Motor neuron (in vitro differentiated cells): ENCODE measurements at regions of chr1 and their contacts with region 1.

Region 1: DNA sequence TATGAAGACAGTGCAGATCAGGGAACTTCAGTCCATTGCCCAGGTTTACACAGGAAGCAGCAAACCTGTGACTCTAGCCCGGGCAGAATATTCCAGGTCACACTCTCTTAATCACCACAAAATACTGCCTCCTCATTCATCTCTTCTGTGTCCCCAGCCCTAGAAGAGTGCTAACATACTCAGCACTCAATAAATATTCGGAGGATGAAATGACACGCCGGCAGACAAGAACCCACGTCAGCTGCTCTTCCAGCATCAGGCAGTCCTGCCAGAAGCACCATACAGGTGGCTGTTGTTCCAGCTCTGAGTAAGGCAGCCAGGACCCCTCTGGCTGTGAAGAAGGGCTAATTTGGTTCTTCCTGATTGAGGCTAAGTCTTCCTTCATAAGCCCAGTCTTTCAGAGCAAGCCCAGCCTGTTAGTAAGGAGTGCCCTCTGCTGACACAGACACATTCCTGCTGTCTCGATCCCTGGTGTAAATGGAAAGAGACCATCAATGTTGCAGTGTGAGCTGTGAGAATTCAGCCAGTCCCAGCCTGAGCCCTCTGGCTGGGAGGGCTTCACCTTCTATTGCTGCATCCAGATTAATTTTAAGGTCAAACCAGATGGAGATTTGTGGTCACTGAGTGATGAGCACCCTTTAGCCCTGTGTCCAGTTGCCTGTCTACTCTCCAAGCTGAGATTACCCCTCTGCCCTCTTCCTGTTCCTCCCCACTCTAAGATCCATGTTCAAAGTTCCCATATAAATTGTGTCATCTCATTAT is 45.0 kb upstream of the KIRREL1 start:
- ATAC-seq: peak; percentile 86 to 98 (median 93)
- H3K4me3 ChIP-seq: no peak overlapping the region
- H3K27ac ChIP-seq: peak overlapping the region in 1 of 2 donors; percentile 40
- H3K4me1 ChIP-seq: peaks cover 9 to 24% of the 10 kb centered on the region in 2 donors

Region 2: DNA sequence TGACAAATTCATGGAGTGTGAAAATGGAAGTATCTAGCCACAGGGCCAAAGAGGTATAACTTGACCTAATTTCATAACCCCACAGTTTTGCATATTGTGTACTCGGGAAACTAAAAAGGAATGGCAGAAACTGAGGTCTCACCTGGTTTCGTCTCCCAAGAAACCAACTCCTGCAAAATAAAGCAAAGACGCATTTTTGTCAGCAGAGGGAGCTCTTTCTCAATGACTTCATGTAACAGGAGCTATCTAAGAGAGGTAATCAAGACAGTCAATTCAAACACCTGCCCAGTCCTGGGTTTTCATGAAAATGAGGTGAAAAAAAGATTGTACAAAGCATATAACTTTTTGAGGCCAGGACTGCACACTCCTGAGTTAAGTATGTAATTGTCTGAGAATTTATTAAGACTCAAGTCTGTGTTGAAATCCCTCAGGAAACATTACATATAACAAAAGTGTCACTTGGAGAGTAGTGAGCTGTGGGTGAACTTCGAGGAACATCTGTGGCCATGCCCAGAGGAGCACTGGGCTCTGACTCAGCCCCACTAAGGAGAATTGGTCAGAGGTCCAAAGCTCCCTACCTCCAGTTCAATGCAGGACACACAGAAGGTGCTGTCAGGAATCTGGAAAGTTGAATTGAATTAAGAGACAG is 368.2 kb before region 1 on chr1:
- in situ Hi-C with region 1: loop called in 3 of 9 experiments (anchors 25 kb)
- ATAC-seq: peak in 7 of 8 experiments; percentile 39 to 71 (median 55)
- H3K4me3 ChIP-seq: no peak overlapping the region
- H3K27ac ChIP-seq: no peak overlapping the region
- H3K4me1 ChIP-seq: peaks cover 2% of the 10 kb centered on the region in 2 donors